ENCODE measurements at regions of chr2 and their contacts with region 1.

Region 1: GRCh38 chr2:101831351-101831865 is 133.9 kb downstream of the MAP4K4 start:
- DNase-seq: peak; percentile 46
- H3K4me3 Mint-ChIP-seq: peak overlapping the region; percentile 32
- H3K27ac Mint-ChIP-seq: peak overlapping the region; percentile 92
- H3K4me1 Mint-ChIP-seq: peaks cover 54% of the 10 kb centered on the region
- H3K27me3 Mint-ChIP-seq: no peaks in the 10 kb centered on the region

Region 2: GRCh38 chr2:101341901-101342624 is 489.3 kb before region 1 on chr2:
- intact Hi-C with region 1: loop called (anchors 1 kb)
- DNase-seq: peak; percentile 46
- H3K4me3 Mint-ChIP-seq: no peak overlapping the region
- H3K27ac Mint-ChIP-seq: no peak overlapping the region
- H3K4me1 Mint-ChIP-seq: peaks cover 33% of the 10 kb centered on the region
- H3K27me3 Mint-ChIP-seq: peaks cover 18% of the 10 kb centered on the region

Region 3: GRCh38 chr2:101697124-101698013 is 134.0 kb before region 1 on chr2 and contains the start of gene MAP4K4:
- intact Hi-C with region 1: loop called (anchors 1 kb)
- DNase-seq: peak; percentile 69
- H3K4me3 Mint-ChIP-seq: peak within 1 kb of the TSS; percentile 88
- H3K27ac Mint-ChIP-seq: peak within 1 kb of the TSS; percentile 88
- H3K4me1 Mint-ChIP-seq: peaks cover 24% of the 10 kb centered on the region
- H3K27me3 Mint-ChIP-seq: no peaks in the 10 kb centered on the region
- total RNA-seq, gene MAP4K4: 54.3 and 54.5 TPM in 2 replicates

Region 4: DNA sequence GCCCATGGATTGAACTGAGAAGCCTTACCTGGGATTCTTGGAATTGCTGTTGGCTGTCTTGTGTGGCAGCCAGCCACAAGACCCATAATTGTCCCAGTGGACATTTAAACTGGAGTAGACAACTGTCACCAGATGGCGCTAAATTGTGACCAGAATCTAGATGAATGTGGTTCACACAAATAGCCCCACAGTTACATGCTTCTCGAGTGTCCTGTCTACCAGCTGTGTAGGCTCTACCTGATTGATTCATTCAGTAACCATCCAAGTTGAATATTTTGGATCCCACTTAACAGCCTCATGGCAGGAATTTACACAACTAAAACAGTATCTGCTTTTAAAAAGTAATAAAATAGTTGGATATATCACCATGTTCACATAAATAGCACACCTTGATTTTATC is 60.7 kb before region 1 on chr2:
- intact Hi-C with region 1: loop called (anchors 2 kb)
- DNase-seq: no peak
- H3K4me3 Mint-ChIP-seq: no peak overlapping the region
- H3K27ac Mint-ChIP-seq: no peak overlapping the region
- H3K4me1 Mint-ChIP-seq: peaks cover 91% of the 10 kb centered on the region
- H3K27me3 Mint-ChIP-seq: no peaks in the 10 kb centered on the region

Region 5: GRCh38 chr2:101793277-101793969 is 38.0 kb before region 1 on chr2:
- intact Hi-C with region 1: no loop called
- DNase-seq: no peak
- H3K4me3 Mint-ChIP-seq: no peak overlapping the region
- H3K27ac Mint-ChIP-seq: no peak overlapping the region
- H3K4me1 Mint-ChIP-seq: peaks cover 24% of the 10 kb centered on the region
- H3K27me3 Mint-ChIP-seq: no peaks in the 10 kb centered on the region